BJ (cell line): ENCODE measurements at regions of chr1 and their contacts with region 1.

Region 1: GRCh38 chr1:110082477-110082876 is 12.0 kb upstream of the ALX3 start:
- DNase-seq: no peak
- H3K4me3 ChIP-seq: peak overlapping the region; percentile 40
- H3K27me3 ChIP-seq: peaks cover 2% of the 10 kb centered on the region; the same call in 1 of the 2 replicates
- CTCF ChIP-seq: no peak

Region 2: GRCh38 chr1:110068646-110069403 is 13.7 kb before region 1 on chr1:
- CTCF ChIA-PET with region 1: interaction called, 19 read pairs
- POLR2A ChIA-PET with region 1: no interaction called
- DNase-seq: no peak
- H3K4me3 ChIP-seq: peak overlapping the region; percentile 43
- H3K27me3 ChIP-seq: peaks cover 25% of the 10 kb centered on the region
- CTCF ChIP-seq: no peak